Activated CD4-positive, alpha-beta T cell treated with anti-CD3 and anti-CD28 coated beads for 36 hours (primary cell): ENCODE measurements at regions of chr6 and their contacts with region 1.

Region 1: DNA sequence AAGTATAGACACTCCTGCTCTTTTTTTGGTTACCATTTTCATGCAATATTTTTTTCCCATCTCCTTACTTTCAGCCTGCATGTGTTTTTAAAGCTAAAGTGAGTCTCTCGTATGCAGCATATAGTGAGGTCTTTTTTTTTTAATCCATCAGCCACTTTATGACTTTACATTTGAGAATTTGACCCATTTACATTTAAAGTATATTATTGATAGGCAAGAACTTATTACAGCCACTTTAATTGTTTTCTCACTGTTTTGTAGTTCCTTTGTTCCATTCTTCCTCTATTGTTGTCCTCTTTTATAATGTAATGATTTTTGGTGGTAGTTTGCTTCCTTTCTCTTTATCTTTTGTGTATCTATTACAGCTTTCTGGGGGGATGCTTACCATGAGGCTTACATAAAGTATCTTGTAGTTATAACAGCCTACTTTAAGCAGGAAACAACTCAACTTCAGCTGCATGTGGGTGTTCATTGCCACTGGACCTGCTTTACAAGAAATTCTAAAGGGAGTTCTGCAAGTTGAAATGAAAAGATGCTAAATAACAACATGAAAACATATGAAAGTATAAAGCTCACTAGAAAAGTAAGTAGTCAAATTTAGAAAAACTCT is 71.8 kb downstream of the TNFAIP3 start:
- DNase-seq: no peak
- ATAC-seq: no peak
- H3K4me3 Mint-ChIP-seq: no peak overlapping the region
- H3K27ac Mint-ChIP-seq: peak overlapping the region; percentile 56
- H3K4me1 Mint-ChIP-seq: peaks cover 43% of the 10 kb centered on the region
- H3K27me3 Mint-ChIP-seq: no peaks in the 10 kb centered on the region

Region 2: DNA sequence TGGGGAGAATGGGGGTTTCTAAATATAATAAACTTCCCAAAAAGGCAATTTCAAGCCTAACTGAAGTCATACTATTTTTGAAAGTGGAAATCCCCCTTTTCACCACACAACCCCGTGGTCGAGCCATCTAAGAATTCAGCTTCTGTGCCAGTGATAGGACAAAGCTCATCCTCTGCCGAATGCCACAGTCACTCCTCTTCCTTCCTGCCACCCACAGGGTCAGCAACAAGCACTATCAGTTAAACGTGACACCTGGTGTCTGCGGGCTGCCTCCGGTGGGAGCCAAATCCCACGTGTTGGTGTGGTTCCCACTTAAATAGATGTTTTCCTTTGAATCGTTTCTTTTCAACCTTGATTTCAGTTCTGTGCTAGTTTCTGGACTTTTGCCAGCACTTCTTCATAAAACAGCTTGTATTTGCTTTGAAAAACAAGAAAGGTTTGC is 11.1 kb before region 1 on chr6:
- CTCF ChIA-PET with region 1: interaction called, 18 read pairs
- POLR2A ChIA-PET with region 1: no interaction called
- intact Hi-C with region 1: loop called (anchors 1 kb)
- DNase-seq: peak; percentile 86
- ATAC-seq: peak; percentile 97
- H3K4me3 Mint-ChIP-seq: peak overlapping the region; percentile 59
- H3K27ac Mint-ChIP-seq: peak overlapping the region; percentile 94
- H3K4me1 Mint-ChIP-seq: peaks cover 58% of the 10 kb centered on the region
- H3K27me3 Mint-ChIP-seq: no peaks in the 10 kb centered on the region

Region 3: DNA sequence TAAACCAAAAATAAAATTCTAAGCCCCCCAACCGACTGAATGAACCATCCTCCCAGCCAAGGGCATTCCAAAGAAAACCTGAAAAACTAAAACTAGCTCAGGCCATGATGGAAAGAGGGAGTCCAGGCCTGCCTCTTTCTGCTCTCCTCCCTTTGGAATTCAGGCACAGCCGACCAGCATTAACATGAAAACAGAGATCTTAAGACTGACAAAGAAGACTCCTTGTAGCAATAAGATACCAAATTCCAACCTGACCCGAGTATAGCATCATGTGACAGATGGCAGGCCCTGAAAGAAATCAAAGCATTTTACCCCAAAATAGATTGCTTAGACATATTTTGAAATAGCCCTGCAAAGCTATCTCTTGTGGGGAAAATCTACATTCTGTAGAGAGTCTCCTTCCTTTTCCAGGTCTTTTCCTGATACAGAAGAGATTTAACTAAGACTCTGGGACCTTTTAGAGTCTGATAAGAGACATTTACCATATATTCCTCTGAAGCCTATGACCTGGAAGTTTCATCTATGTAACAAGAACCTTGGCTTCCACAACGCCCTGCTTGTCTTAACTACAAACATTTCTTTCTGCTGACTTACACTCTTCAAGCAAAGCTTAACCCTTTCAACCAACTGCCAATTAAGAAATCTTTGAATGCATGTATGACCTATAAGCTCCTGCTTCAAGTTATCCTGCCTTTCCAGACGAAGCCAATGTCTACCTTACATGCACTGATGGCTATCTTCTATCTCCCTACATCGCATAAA is 1375.1 kb after region 1 on chr6:
- CTCF ChIA-PET with region 1: no interaction called
- POLR2A ChIA-PET with region 1: no interaction called
- intact Hi-C with region 1: no loop called
- DNase-seq: no peak
- ATAC-seq: no peak
- H3K4me3 Mint-ChIP-seq: no peak overlapping the region
- H3K27ac Mint-ChIP-seq: no peak overlapping the region
- H3K4me1 Mint-ChIP-seq: peaks cover 21% of the 10 kb centered on the region
- H3K27me3 Mint-ChIP-seq: no peaks in the 10 kb centered on the region